ENCODE measurements at regions of chr18 and their contacts with region 1.

Region 1: DNA sequence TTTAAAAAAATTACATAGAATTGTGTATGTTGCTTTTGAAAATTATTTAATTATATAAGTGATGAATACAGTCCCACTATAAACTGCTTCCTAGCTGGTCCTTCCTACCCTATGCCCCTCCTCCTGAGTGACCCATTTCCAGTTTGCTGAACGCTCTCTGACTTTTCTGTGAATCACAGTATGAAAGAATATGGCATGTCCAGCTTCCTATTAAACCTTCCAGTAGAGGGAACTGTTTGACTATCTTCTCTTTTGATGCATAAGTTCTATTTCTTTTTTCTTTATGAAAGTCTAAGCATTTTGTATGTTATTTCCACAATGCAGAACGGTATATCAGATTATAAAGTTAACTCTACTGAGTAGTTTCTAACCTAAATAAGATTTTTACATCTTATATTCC is 41.3 kb downstream of the PSMG2 start:
- DNase-seq: no peak
- H3K4me3 ChIP-seq: no peak overlapping the region
- H3K27ac ChIP-seq: no peak overlapping the region
- H3K4me1 ChIP-seq: no peaks in the 10 kb centered on the region
- H3K27me3 ChIP-seq: no peaks in the 10 kb centered on the region
- CTCF ChIP-seq: peak; percentile 42 to 56 (median 56)
- EP300 ChIP-seq: no peak
- POLR2A ChIP-seq: no peak

Region 2: DNA sequence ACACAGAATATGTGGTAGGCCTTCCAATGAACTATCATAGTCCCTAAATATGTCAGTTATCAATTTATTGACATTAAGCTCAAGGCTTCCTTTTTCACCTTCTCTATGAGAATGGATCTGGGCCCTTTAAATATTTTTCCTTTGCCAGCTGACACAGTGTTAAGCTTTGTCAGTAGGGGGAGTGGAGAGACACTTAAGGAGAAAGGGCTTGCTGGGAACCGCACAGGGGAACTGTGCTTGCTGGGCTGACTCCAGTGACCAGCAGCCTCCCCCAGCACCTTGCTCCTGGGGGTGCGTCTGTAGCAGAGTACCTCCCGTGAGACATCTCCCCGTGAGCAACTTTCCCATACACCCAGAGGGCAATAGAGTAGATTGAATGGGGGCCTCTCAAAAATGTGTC is 146.4 kb after region 1 on chr18:
- intact Hi-C with region 1: loop called (anchors 5 kb)
- DNase-seq: no peak
- H3K4me3 ChIP-seq: no peak overlapping the region
- H3K27ac ChIP-seq: no peak overlapping the region
- H3K4me1 ChIP-seq: peaks cover 0 to 3% (median 0%) of the 10 kb centered on the region in 4 donors
- H3K27me3 ChIP-seq: peaks cover 0 to 10% (median 0%) of the 10 kb centered on the region in 4 donors
- CTCF ChIP-seq: no peak
- EP300 ChIP-seq: no peak
- POLR2A ChIP-seq: no peak

Region 3: DNA sequence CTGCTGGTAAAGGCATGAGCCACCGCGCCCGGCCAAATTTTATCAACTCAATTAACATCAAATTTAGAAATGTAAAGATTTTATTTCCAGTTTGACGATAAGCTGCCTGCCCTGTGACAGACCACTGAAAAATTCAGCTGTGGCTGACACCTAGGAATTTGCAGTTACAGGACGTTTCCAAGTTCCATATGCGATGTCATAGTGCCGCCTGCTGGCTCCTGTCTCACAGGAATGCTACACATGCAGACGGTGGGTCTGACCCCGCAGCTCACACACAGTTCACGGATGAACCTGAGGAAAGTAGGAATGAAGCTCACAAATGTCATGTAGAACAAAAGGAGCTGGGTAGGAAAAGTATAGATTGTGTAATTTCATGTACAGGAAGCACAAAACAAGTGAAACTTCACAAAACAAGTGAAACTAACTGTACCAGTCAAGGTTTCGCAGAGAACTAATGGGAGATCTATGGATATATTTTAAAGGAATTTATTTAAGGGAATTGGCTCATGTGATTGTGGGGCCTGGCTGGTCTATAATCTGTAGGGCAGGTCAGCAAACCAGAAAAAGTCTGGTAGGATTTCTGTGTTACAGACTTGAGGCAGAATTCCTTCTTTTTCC is 190.5 kb after region 1 on chr18:
- intact Hi-C with region 1: loop called (anchors 2 kb)
- DNase-seq: no peak
- H3K4me3 ChIP-seq: no peak overlapping the region
- H3K27ac ChIP-seq: no peak overlapping the region
- H3K4me1 ChIP-seq: peaks cover 0 to 9% (median 8%) of the 10 kb centered on the region in 4 donors
- H3K27me3 ChIP-seq: no peaks in the 10 kb centered on the region
- CTCF ChIP-seq: peak; percentile 83 to 91 (median 85)
- EP300 ChIP-seq: no peak
- POLR2A ChIP-seq: no peak

Measured in esophagus muscularis mucosa (tissue), 4 donors.